Spleen (tissue), 13 donors: ENCODE measurements at regions of chr9 and their contacts with region 1.

Region 1: GRCh38 chr9:75185585-75186170 is 97.4 kb downstream of the OSTF1 start:
- DNase-seq: peak; percentile 78
- H3K4me3 ChIP-seq: no peak overlapping the region
- H3K27ac ChIP-seq: no peak overlapping the region
- H3K4me1 ChIP-seq: peaks cover 0 to 19% (median 4%) of the 10 kb centered on the region in 6 donors
- H3K27me3 ChIP-seq: no peaks in the 10 kb centered on the region
- CTCF ChIP-seq: peak in 7 of 11 experiments; percentile 16 to 61 (median 58)
- POLR2A ChIP-seq: no peak

Region 2: DNA sequence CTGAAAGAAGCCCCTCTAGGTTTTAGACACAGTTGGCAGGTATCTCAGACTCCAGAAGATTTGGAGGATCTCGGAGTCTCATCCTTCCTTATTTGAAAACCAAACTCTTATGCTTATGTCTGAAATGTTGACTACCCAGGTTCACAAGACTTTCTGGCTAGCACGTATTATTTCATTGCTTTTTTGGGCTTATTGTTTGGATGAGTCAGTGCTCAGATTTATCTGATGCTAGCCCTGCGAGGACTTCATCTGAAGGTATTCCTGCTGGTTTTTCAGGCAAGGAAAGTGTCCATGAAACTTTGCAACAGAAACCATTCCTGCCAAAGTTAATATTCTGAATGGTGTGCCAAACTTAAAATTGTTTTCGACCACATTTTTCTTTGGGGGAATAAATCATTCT is 88.9 kb before region 1 on chr9:
- intact Hi-C with region 1: loop called (anchors 10 kb)
- DNase-seq: no peak
- H3K4me3 ChIP-seq: no peak overlapping the region
- H3K27ac ChIP-seq: no peak overlapping the region
- H3K4me1 ChIP-seq: peaks cover 13 to 100% (median 82%) of the 10 kb centered on the region in 6 donors
- H3K27me3 ChIP-seq: no peaks in the 10 kb centered on the region
- CTCF ChIP-seq: no peak
- POLR2A ChIP-seq: no peak

Region 3: GRCh38 chr9:75108555-75108954 is 77.1 kb before region 1 on chr9:
- intact Hi-C with region 1: no loop called
- DNase-seq: peak; percentile 89
- H3K4me3 ChIP-seq: peak overlapping the region in 1 of 8 donors; percentile 12
- H3K27ac ChIP-seq: peak overlapping the region in 7 of 8 donors; percentile 74 to 88 (median 79)
- H3K4me1 ChIP-seq: peaks cover 29 to 100% (median 93%) of the 10 kb centered on the region in 6 donors
- H3K27me3 ChIP-seq: no peaks in the 10 kb centered on the region
- CTCF ChIP-seq: no peak
- POLR2A ChIP-seq: no peak